ENCODE measurements at regions of chr7 and their contacts with region 1.

Region 1: GRCh38 chr7:151519765-151520418 is at the start of gene RHEB:
- DNase-seq: peak; percentile 99
- H3K4me3 Mint-ChIP-seq: peak within 1 kb of the TSS; percentile 92
- H3K27ac Mint-ChIP-seq: peak within 1 kb of the TSS; percentile 96
- H3K4me1 Mint-ChIP-seq: peaks cover 35% of the 10 kb centered on the region
- H3K27me3 Mint-ChIP-seq: no peaks in the 10 kb centered on the region
- total RNA-seq, gene RHEB: 62.0 to 64.6 TPM

Region 2: DNA sequence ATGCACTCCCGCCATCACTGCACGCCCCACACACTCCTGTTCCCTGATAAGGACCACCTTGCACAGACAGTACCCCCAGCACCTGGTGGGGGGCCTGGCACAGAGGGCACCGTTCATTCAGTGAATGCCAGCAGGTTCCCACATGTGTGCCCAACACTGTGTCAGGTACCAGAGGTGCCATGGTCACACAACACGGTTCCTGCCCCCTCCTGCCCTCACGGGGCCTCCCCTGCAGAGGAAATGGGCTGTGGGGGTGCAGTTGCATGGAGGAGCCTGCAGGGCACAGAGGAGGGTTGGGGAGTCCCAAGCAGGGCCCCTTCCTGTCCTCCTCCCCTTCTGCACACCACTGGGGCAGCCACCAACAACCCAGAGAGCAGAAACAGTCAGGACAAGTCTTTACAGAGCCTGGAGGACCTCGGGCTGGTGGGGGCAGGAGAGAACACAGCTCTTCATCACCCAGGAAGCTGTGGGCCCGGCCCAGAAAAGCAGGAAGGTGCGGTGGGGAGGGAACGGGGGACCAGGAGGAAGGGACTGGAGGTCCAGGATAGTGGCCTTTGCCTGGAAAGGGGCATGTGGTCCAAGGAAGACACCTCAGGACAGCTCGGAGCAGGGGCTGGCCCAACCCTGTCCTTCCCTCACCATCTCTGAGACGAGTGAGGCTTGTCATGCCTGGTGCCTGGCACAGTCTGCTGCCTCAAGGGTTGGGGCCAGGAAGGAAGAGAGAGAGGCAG is 86.9 kb before region 1 on chr7:
- CTCF ChIA-PET with region 1: no interaction called
- POLR2A ChIA-PET with region 1: interaction called, 3 read pairs
- intact Hi-C with region 1: loop called (anchors 5 kb)
- DNase-seq: peak; percentile 84
- H3K4me3 Mint-ChIP-seq: peak overlapping the region; percentile 13
- H3K27ac Mint-ChIP-seq: peak overlapping the region; percentile 68
- H3K4me1 Mint-ChIP-seq: peaks cover 40% of the 10 kb centered on the region
- H3K27me3 Mint-ChIP-seq: no peaks in the 10 kb centered on the region

Region 3: DNA sequence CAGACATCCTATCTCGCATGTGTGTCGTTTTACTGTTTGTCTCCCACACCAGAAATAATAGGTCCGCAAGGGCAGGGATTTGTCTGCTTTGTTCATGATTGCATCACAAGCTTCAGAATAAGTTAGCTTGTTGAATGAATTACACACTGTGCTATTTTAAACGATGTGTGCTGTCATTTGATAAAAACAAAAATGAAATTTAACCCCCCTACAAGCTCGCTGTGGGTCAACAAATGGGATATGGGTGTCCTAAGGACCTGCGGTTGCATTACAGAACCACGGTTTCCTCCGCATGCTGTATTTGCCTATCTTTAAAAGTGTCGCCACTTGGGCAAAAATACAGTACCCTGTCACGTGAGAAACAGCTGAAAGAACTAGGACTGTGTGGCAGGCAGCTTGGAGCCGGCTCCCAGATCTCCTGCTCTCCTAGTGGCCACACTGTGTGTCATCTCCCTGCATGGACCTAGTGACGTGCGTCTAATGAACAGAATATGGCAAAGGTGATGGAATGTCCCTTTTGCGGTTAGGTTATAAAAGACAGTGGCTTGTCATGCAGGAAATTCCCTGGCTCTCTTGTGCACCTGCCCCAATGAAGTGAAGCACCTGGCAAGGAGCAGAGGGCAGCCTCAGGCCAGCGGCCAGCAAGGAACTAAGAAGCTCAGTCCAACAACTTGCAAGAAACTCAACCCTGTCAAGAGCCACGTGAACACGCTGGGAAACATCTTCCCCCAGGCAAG is 47.1 kb before region 1 on chr7:
- CTCF ChIA-PET with region 1: interaction called, 3 read pairs
- POLR2A ChIA-PET with region 1: no interaction called
- intact Hi-C with region 1: loop called (anchors 5 kb)
- DNase-seq: no peak
- H3K4me3 Mint-ChIP-seq: no peak overlapping the region
- H3K27ac Mint-ChIP-seq: peak overlapping the region; percentile 67
- H3K4me1 Mint-ChIP-seq: peaks cover 48% of the 10 kb centered on the region
- H3K27me3 Mint-ChIP-seq: no peaks in the 10 kb centered on the region

Measured in activated CD4-positive, alpha-beta memory T cell treated with anti-CD3 and anti-CD28 coated beads for 36 hours (primary cell).